ENCODE measurements at regions of chr17 and their contacts with region 1.

Region 1: GRCh38 chr17:51435641-51436091 is 175.3 kb downstream of the UTP18 start:
- DNase-seq: peak; percentile 21
- CTCF ChIP-seq: peak; percentile 46

Region 2: GRCh38 chr17:51423421-51424154 is 12.1 kb before region 1 on chr17:
- CTCF ChIA-PET with region 1: interaction called, 14 read pairs
- POLR2A ChIA-PET with region 1: no interaction called
- DNase-seq: no peak
- CTCF ChIP-seq: no peak

Region 3: DNA sequence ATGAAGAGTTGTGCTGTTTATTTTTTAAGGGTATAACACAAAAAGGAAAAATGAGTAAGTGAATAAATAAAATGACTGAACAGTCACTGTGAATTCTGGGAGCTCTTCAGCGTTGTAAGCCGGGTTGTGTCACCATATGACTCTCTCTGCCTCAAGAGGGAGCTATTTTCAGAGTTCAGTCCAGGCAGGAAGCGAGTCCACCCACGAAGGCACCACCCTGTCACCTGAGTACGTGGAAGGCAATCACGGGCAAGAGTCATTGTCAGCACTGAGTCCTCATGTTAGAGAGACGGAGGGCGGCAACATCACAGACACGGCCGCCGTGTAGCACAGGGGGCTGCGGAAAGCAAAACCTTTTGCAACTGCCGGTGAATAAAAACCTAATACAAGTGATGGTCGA is 52.3 kb after region 1 on chr17:
- CTCF ChIA-PET with region 1: no interaction called
- POLR2A ChIA-PET with region 1: no interaction called
- DNase-seq: no peak
- CTCF ChIP-seq: no peak

Measured in GM10248 (cell line).